Pancreas (tissue), 10 donors: ENCODE measurements at regions of chr7 and their contacts with region 1.

Region 1: DNA sequence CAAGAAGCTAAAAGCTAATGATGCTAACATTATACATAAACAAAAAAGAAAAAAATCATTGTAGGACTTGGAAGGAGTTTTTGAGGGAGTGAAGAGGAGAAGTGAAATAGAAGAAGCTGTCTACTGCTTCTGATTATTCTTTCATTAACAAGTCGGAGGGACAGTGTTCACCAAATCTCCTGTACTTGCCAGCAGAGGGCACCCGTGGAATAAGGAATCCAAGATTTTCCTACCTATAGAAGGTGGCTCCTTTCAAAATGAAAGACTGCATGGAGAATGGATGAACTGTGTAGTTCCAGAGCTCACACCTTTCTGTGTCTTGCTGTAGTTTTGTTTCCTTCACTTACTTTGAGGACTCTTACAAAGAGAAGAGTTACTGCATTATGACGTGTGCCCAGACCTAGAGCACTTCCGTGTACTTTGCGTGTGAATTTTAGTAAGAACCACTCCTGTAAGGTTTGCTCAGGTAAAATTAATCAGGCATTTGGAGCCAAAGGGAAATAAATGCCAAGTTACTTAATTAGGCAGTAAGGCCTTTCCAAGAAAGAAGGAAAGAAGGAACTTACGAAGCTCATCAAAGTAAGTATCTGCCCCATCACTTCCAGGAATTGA is 145.1 kb downstream of the SEMA3D start:
- DNase-seq: peak; percentile 38 to 74 (median 48)
- ATAC-seq: peak; percentile 80 to 93 (median 90)
- H3K4me3 ChIP-seq: no peak overlapping the region
- H3K27ac ChIP-seq: no peak overlapping the region
- H3K4me1 ChIP-seq: no peaks in the 10 kb centered on the region
- H3K27me3 ChIP-seq: peaks cover 0 to 5% (median 0%) of the 10 kb centered on the region in 4 donors
- CTCF ChIP-seq: peak; percentile 19 to 61 (median 44)

Region 2: DNA sequence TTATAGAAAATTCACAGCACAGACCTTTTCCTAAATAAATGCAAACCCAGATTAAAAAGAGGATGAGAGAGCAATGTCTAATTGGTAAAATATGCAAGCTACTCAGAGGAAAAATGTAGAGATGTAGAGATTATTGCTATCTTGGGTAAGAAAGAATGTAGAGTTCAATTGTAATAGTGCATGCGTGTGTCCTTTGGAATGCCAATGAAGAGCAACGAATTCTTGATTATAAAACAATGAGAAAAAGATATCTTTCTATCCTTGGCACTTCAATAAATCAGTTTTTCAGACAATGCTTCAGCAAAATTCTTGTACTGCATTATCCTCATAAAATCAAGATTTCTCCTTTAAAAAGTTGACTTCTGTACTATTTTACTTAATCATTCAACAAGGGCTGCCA is 94.3 kb after region 1 on chr7:
- intact Hi-C with region 1: no loop called
- DNase-seq: no peak
- ATAC-seq: no peak
- H3K4me3 ChIP-seq: no peak overlapping the region
- H3K27ac ChIP-seq: no peak overlapping the region
- H3K4me1 ChIP-seq: no peaks in the 10 kb centered on the region
- H3K27me3 ChIP-seq: no peaks in the 10 kb centered on the region
- CTCF ChIP-seq: no peak

Region 3: GRCh38 chr7:85215098-85215497 is 173.4 kb after region 1 on chr7:
- intact Hi-C with region 1: no loop called
- DNase-seq: no peak
- ATAC-seq: no peak
- H3K4me3 ChIP-seq: no peak overlapping the region
- H3K27ac ChIP-seq: no peak overlapping the region
- H3K4me1 ChIP-seq: no peaks in the 10 kb centered on the region
- H3K27me3 ChIP-seq: no peaks in the 10 kb centered on the region
- CTCF ChIP-seq: no peak

Region 4: GRCh38 chr7:85567983-85568382 is 526.3 kb after region 1 on chr7:
- intact Hi-C with region 1: loop called in 1 of 3 experiments (anchors 10 kb)
- DNase-seq: no peak
- ATAC-seq: no peak
- H3K4me3 ChIP-seq: no peak overlapping the region
- H3K27ac ChIP-seq: no peak overlapping the region
- H3K4me1 ChIP-seq: no peaks in the 10 kb centered on the region
- H3K27me3 ChIP-seq: no peaks in the 10 kb centered on the region
- CTCF ChIP-seq: no peak

Region 5: DNA sequence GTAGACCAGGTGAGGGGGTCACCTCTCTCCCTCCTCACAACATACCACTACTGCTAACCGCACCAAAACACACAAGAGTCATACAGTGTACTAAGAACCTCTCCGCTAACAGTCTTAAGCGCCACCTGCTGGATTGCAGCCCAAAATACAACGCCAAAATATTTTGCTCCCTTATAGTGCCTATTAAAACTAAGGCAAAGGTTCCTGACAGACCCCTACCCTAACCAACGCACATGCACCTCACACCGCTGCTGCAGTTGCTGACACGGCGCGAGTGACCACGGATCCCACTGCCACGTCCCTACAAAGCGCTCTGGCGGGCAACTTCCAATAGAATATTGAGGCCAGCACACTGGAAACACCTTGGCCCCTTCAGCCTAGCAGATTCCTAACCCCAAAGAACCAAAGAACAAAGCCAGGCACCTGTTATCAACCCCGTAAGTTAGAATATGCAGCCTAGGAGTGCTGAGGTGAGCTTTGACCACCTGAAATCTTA is 708.8 kb after region 1 on chr7:
- intact Hi-C with region 1: loop called in 1 of 3 experiments (anchors 10 kb)
- DNase-seq: peak in 5 of 6 donors; percentile 29 to 64 (median 43)
- ATAC-seq: peak; percentile 72 to 84 (median 81)
- H3K4me3 ChIP-seq: no peak overlapping the region
- H3K27ac ChIP-seq: no peak overlapping the region
- H3K4me1 ChIP-seq: no peaks in the 10 kb centered on the region
- H3K27me3 ChIP-seq: peaks cover 0 to 10% (median 0%) of the 10 kb centered on the region in 4 donors
- CTCF ChIP-seq: peak; percentile 21 to 45 (median 42)